Natural killer cell (primary cell): ENCODE measurements at regions of chr12 and their contacts with region 1.

Region 1: GRCh38 chr12:47779301-47779942 is 6.4 kb downstream of the SLC48A1 start:
- DNase-seq: peak; percentile 91 to 94
- ATAC-seq: peak; percentile 92 to 98 (median 92)
- H3K4me3 ChIP-seq: no peak overlapping the region
- H3K4me3 Mint-ChIP-seq: no peak overlapping the region
- H3K27ac ChIP-seq: no peak overlapping the region
- H3K27ac Mint-ChIP-seq: peak overlapping the region; percentile 68 to 70
- H3K4me1 ChIP-seq: peaks cover 31% of the 10 kb centered on the region
- H3K4me1 Mint-ChIP-seq: peaks cover 7 to 33% of the 10 kb centered on the region in 2 donors
- H3K27me3 ChIP-seq: no peaks in the 10 kb centered on the region
- H3K27me3 Mint-ChIP-seq: peaks cover 0 to 4% of the 10 kb centered on the region in 2 donors
- CTCF ChIP-seq: peak; percentile 92

Region 2: DNA sequence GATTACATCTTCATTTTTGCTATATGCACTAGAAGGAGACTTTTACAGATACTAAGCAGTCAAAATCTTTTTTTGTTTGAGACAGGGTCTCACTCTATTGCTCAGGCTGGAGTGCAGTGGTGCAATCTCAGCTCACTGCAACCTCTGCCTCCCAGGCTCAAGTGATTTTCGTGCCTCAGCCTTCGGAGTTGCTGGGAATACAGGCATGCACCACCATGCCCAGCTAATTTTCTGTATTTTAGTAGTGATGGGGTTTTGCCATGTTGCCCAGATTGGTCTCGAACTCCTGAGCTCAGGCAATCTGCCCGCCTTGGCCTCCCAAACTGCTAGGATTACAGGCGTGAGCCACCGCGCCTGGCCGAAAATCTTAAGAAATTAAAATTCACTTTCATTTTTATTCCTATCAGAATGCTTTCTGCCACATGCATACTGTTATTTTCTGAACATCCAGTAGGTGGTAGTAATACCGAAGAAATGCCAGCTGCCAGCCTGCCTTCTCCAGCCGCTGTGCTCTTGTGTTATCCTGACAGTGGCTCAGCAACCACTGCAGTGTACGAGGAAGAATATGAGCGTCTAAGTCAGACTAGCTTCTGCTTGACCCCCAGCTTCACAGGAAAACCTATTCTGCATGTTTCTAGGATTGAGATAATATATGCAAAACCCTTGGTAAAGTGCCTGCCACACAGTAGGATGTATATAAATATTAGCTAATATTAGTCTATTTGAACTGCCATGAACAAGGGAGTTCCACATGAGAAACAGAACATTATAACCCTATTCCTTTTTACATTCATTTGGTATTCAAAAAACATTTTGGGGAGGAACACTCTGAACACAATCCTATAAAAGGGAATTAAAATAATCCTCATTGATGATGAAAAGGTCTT is 127.8 kb before region 1 on chr12:
- intact Hi-C with region 1: loop called (anchors 1 kb)
- DNase-seq: peak in 1 of 2 donors; percentile 74
- ATAC-seq: peak; percentile 90 to 99 (median 96)
- H3K4me3 ChIP-seq: no peak overlapping the region
- H3K4me3 Mint-ChIP-seq: peak overlapping the region; percentile 30
- H3K27ac ChIP-seq: no peak overlapping the region
- H3K27ac Mint-ChIP-seq: peak overlapping the region; percentile 39 to 70
- H3K4me1 ChIP-seq: peaks cover 4% of the 10 kb centered on the region
- H3K4me1 Mint-ChIP-seq: peaks cover 0 to 8% of the 10 kb centered on the region in 2 donors
- H3K27me3 ChIP-seq: no peaks in the 10 kb centered on the region
- H3K27me3 Mint-ChIP-seq: no peaks in the 10 kb centered on the region
- CTCF ChIP-seq: peak; percentile 79

Region 3: DNA sequence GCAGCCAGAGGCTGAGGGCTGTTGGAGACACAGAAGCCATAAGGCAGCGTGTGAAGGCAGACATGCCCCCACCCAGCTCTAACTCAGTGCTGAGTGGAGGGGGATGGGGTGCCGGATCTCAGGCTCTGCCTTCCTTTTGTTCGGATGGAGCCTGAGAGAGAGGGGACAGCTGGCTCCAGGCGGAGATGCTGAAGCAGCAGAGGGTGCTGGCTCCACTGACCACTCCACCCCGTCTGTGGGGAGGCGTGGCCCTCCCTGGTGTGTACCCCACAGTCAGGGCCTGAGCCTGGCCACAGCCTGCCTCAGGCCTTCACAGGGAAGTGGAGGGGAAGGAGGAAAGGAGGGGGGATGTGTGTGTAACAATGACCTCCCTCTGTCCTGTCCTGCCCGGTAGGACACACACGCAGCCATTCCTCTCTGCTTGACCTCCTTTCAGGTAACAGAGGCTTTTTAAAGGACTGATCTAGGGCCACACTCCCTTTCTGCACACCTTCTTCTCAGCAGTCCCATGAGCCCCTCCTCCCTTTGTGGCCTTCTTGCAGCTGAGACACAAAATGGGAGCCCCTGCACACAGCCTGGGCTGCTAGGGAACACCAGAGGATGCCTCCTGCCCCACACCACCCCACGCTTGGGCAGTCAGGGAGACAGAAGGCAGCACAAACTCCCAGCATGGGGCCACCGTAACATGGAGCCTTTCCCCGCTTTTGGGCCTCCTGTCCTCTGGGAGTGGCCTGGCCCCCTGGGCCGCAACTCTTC is 44.5 kb before region 1 on chr12:
- intact Hi-C with region 1: no loop called
- DNase-seq: no peak
- ATAC-seq: no peak
- H3K4me3 ChIP-seq: no peak overlapping the region
- H3K4me3 Mint-ChIP-seq: no peak overlapping the region
- H3K27ac ChIP-seq: no peak overlapping the region
- H3K27ac Mint-ChIP-seq: peak overlapping the region in 1 of 2 donors; percentile 48
- H3K4me1 ChIP-seq: peaks cover 5% of the 10 kb centered on the region
- H3K4me1 Mint-ChIP-seq: peaks cover 6 to 10% of the 10 kb centered on the region in 2 donors
- H3K27me3 ChIP-seq: no peaks in the 10 kb centered on the region
- H3K27me3 Mint-ChIP-seq: peaks cover 0 to 4% of the 10 kb centered on the region in 2 donors
- CTCF ChIP-seq: no peak